ENCODE measurements at regions of chr11 and their contacts with region 1.

Region 1: GRCh38 chr11:18721561-18722292 is 4.3 kb downstream of the IGSF22 start:
- DNase-seq: peak in 8 of 9 experiments; percentile 24 to 75 (median 50)
- ATAC-seq: peak; percentile 48
- H3K4me3 ChIP-seq: peak overlapping the region; percentile 80 to 92
- H3K4me3 Mint-ChIP-seq: peak overlapping the region; percentile 84
- H3K27ac ChIP-seq: peak overlapping the region; percentile 12 to 48
- H3K27ac Mint-ChIP-seq: no peak overlapping the region
- H3K4me1 ChIP-seq: peaks cover 4% of the 10 kb centered on the region
- H3K4me1 Mint-ChIP-seq: peaks cover 7% of the 10 kb centered on the region
- H3K27me3 ChIP-seq: no peaks in the 10 kb centered on the region
- H3K27me3 Mint-ChIP-seq: no peaks in the 10 kb centered on the region
- CTCF ChIP-seq: peak; percentile 80

Region 2: GRCh38 chr11:18321980-18322711 is 399.6 kb before region 1 on chr11 and contains the starts of genes GTF2H1 and HPS5:
- CTCF ChIA-PET with region 1: no interaction called
- POLR2A ChIA-PET with region 1: no interaction called
- intact Hi-C with region 1: loop called (anchors 1 to 5 kb)
- DNase-seq: peak; percentile 91 to 100 (median 96)
- ATAC-seq: peak; percentile 87
- H3K4me3 ChIP-seq: peak within 1 kb of the TSS; percentile 89 to 94
- H3K4me3 Mint-ChIP-seq: peak within 1 kb of the TSS; percentile 100
- H3K27ac ChIP-seq: peak within 1 kb of the TSS; percentile 92 to 99
- H3K27ac Mint-ChIP-seq: peak within 1 kb of the TSS; percentile 100
- H3K4me1 ChIP-seq: peaks cover 51% of the 10 kb centered on the region
- H3K4me1 Mint-ChIP-seq: peaks cover 81% of the 10 kb centered on the region
- H3K27me3 ChIP-seq: no peaks in the 10 kb centered on the region
- H3K27me3 Mint-ChIP-seq: no peaks in the 10 kb centered on the region
- CTCF ChIP-seq: no peak
- total RNA-seq, gene GTF2H1: 11.3 to 14.3 TPM
- total RNA-seq, gene HPS5: 9.9 to 12.6 TPM

Region 3: GRCh38 chr11:18395735-18396504 is 325.8 kb before region 1 on chr11:
- CTCF ChIA-PET with region 1: no interaction called
- POLR2A ChIA-PET with region 1: no interaction called
- intact Hi-C with region 1: loop called in 1 of 2 experiments (anchors 5 kb)
- DNase-seq: peak; percentile 89 to 98 (median 92)
- ATAC-seq: peak; percentile 54
- H3K4me3 ChIP-seq: peak overlapping the region; percentile 86 to 98
- H3K4me3 Mint-ChIP-seq: peak overlapping the region; percentile 97
- H3K27ac ChIP-seq: peak overlapping the region; percentile 90
- H3K27ac Mint-ChIP-seq: peak overlapping the region; percentile 96
- H3K4me1 ChIP-seq: peaks cover 22% of the 10 kb centered on the region
- H3K4me1 Mint-ChIP-seq: peaks cover 35% of the 10 kb centered on the region
- H3K27me3 ChIP-seq: no peaks in the 10 kb centered on the region
- H3K27me3 Mint-ChIP-seq: no peaks in the 10 kb centered on the region
- CTCF ChIP-seq: no peak

Region 4: DNA sequence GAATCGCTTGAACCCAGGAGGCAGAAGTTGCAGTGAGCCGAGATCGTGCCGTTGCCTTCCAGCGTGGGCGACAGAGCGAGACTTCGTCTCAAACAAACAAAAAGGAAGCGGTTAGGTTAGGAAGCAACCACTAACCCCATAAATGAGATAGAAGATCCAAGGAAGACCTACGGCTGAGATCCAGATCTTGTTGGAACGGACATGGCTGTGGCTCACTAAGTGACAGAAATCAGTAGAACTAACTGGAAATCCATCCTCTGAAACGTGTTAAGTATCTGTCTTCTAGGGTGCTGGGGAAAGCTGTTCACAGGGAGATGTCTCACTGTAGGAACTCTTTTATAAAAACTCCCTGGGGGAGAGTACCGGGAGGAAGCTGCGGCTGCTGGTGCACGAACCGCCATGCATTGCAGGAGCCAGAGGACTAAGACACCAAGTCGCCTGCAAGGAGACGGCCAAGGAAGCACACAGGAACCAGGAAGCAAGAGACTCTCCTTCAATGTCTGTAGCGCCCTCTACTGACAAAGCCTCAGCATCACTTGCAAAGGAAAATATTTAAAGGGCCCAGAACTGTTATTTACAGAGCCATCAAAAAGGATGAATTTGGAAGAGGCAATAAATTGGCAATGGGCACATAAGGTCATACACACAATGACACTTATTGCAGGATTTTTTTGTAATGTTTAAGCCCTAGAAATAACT is 70.7 kb before region 1 on chr11:
- CTCF ChIA-PET with region 1: interaction called, 10 read pairs
- POLR2A ChIA-PET with region 1: no interaction called
- intact Hi-C with region 1: no loop called
- DNase-seq: peak in 5 of 9 experiments; percentile 21 to 66 (median 35)
- ATAC-seq: peak; percentile 40
- H3K4me3 ChIP-seq: no peak overlapping the region
- H3K4me3 Mint-ChIP-seq: no peak overlapping the region
- H3K27ac ChIP-seq: no peak overlapping the region
- H3K27ac Mint-ChIP-seq: no peak overlapping the region
- H3K4me1 ChIP-seq: no peaks in the 10 kb centered on the region
- H3K4me1 Mint-ChIP-seq: peaks cover 2% of the 10 kb centered on the region
- H3K27me3 ChIP-seq: no peaks in the 10 kb centered on the region
- H3K27me3 Mint-ChIP-seq: no peaks in the 10 kb centered on the region
- CTCF ChIP-seq: no peak

Region 5: GRCh38 chr11:18698341-18699268 is 23.1 kb before region 1 on chr11 and contains the start of gene TMEM86A:
- CTCF ChIA-PET with region 1: interaction called, 15 read pairs
- POLR2A ChIA-PET with region 1: no interaction called
- intact Hi-C with region 1: loop called (anchors 1 to 2 kb)
- DNase-seq: peak; percentile 80 to 95 (median 90)
- ATAC-seq: peak; percentile 94
- H3K4me3 ChIP-seq: peak within 1 kb of the TSS; percentile 58 to 67
- H3K4me3 Mint-ChIP-seq: peak within 1 kb of the TSS; percentile 84
- H3K27ac ChIP-seq: peak within 1 kb of the TSS; percentile 48 to 51
- H3K27ac Mint-ChIP-seq: peak within 1 kb of the TSS; percentile 86
- H3K4me1 ChIP-seq: peaks cover 10% of the 10 kb centered on the region
- H3K4me1 Mint-ChIP-seq: peaks cover 17% of the 10 kb centered on the region
- H3K27me3 ChIP-seq: no peaks in the 10 kb centered on the region
- H3K27me3 Mint-ChIP-seq: no peaks in the 10 kb centered on the region
- CTCF ChIP-seq: no peak
- total RNA-seq, gene TMEM86A: 5.2 to 6.1 TPM

Region 6: GRCh38 chr11:18731949-18732821 is 10.5 kb after region 1 on chr11:
- CTCF ChIA-PET with region 1: interaction called, 25 read pairs
- POLR2A ChIA-PET with region 1: interaction called, 5 read pairs
- intact Hi-C with region 1: no loop called
- DNase-seq: peak; percentile 54 to 82 (median 73)
- ATAC-seq: peak; percentile 87
- H3K4me3 ChIP-seq: no peak overlapping the region
- H3K4me3 Mint-ChIP-seq: no peak overlapping the region
- H3K27ac ChIP-seq: no peak overlapping the region
- H3K27ac Mint-ChIP-seq: no peak overlapping the region
- H3K4me1 ChIP-seq: peaks cover 9% of the 10 kb centered on the region
- H3K4me1 Mint-ChIP-seq: peaks cover 11% of the 10 kb centered on the region
- H3K27me3 ChIP-seq: no peaks in the 10 kb centered on the region
- H3K27me3 Mint-ChIP-seq: no peaks in the 10 kb centered on the region
- CTCF ChIP-seq: peak; percentile 97

Measured in CD8-positive, alpha-beta T cell (primary cell).